Activated naive CD4-positive, alpha-beta T cell treated with anti-CD3 and anti-CD28 coated beads for 36 hours (primary cell): ENCODE measurements at regions of chr3 and their contacts with region 1.

Region 1: DNA sequence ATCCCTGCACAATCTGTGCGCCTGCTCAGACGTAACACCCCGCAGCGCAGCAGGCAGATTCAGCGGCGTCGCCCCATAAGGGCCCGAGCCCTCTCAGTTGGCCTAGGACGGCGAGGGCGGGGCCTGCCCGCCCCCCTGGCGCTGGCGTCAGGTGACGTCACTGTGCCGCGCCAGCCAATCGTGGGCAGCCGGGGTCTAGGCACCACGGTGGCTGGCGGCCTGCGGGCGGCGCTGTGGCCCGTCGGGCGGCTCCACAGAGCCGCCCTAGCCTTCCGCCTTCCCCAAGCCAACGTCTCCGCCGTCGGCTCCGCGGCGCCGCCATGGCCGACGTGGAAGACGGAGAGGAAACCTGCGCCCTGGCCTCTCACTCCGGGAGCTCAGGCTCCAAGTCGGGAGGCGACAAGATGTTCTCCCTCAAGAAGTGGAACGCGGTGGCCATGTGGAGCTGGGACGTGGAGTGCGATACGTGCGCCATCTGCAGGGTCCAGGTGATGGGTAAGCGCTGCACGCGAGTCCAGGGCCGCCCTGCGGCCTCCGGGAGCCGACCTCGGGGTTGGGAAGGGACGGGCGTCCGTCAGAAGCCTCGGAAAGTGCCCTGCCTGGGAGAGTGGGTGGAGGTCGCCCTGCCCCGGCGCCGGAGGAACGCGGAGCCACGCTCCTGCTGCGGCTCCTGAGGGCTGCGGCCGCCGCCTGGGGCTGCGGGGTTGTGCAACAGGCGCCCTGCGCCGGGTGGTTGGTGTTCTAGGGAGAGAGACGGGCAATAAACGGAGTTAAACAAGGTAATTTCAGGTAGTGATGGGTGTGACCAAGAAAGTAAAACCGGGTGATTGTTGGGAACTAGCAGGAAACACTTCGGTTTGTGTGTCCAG is at the start of gene RNF7:
- DNase-seq: peak; percentile 96
- H3K4me3 Mint-ChIP-seq: peak within 1 kb of the TSS; percentile 99
- H3K27ac Mint-ChIP-seq: peak within 1 kb of the TSS; percentile 99
- H3K4me1 Mint-ChIP-seq: peaks cover 36% of the 10 kb centered on the region
- H3K27me3 Mint-ChIP-seq: no peaks in the 10 kb centered on the region
- total RNA-seq, gene RNF7: 56.3 to 57.4 TPM

Region 2: GRCh38 chr3:141303481-141304223 is 434.6 kb before region 1 on chr3:
- CTCF ChIA-PET with region 1: interaction called, 3 read pairs
- intact Hi-C with region 1: loop called (anchors 2 kb)
- DNase-seq: peak; percentile 85
- H3K4me3 Mint-ChIP-seq: no peak overlapping the region
- H3K27ac Mint-ChIP-seq: no peak overlapping the region
- H3K4me1 Mint-ChIP-seq: peaks cover 55% of the 10 kb centered on the region
- H3K27me3 Mint-ChIP-seq: no peaks in the 10 kb centered on the region

Region 3: DNA sequence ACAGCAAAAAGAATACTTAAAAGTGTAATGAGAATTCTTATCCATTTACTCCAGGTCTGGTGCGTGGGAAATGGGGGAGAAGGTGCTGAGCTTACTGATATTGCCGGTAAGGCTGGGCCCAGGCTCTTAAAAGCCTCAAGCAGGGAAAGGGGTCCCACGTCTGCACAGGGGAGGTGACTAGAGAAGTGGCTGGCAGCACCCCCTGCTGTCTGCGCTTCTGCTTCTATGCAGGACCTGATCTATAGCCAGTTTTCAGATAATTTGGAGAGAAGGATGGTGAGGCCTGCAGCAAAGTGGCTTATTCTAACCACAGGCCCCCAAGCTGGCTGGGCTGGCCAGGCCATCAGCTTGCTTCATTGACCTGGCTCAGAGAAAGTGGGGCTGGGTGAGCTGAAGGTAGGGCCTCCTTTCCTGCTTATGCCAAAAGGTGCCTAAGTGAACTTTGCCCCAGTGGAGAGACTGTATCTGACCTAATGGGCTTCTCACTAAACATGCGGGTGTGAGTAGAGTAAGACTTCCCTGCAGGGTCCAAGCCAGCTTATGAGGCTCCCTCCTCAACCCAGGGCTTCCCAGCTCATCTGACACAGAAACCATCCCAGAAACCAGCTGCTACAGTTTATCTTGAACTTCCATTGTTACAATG is 107.3 kb after region 1 on chr3:
- CTCF ChIA-PET with region 1: interaction called, 3 read pairs
- intact Hi-C with region 1: loop called (anchors 1 kb)
- DNase-seq: peak; percentile 48
- H3K4me3 Mint-ChIP-seq: no peak overlapping the region
- H3K27ac Mint-ChIP-seq: no peak overlapping the region
- H3K4me1 Mint-ChIP-seq: peaks cover 13% of the 10 kb centered on the region
- H3K27me3 Mint-ChIP-seq: no peaks in the 10 kb centered on the region

Region 4: DNA sequence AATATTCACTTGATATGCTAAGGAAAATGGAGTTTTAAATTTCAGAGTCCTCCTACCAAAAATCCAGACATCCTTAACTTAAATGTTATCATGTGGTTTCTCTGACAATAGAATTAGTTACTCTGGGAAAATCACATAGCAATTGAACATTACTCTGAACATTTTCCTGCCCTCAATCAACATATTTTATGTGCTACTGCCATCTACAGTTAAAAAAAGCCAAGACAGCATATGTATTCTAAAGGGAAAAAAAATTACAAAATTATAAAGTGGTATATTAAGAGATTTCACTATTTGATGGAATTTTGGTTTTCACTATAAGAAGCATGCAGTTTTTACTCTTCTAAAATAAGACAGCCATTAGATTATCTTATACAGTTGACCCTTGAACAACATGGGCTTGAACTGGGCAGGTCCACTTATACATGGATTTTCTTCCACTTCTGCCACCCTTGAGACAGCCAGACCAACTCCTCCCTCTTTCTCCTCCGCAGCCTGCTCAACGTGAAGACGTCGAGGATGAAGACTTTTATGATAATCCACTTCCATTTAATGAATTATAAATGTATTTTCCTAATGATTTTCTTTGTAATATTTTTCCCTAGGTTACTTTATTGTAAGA is 260.5 kb after region 1 on chr3:
- CTCF ChIA-PET with region 1: interaction called, 3 read pairs
- intact Hi-C with region 1: loop called (anchors 1 kb)
- DNase-seq: no peak
- H3K4me3 Mint-ChIP-seq: no peak overlapping the region
- H3K27ac Mint-ChIP-seq: no peak overlapping the region
- H3K4me1 Mint-ChIP-seq: no peaks in the 10 kb centered on the region
- H3K27me3 Mint-ChIP-seq: no peaks in the 10 kb centered on the region

Region 5: GRCh38 chr3:142226484-142226883 is 488.2 kb after region 1 on chr3:
- CTCF ChIA-PET with region 1: no interaction called
- intact Hi-C with region 1: loop called (anchors 1 kb)
- DNase-seq: no peak
- H3K4me3 Mint-ChIP-seq: no peak overlapping the region
- H3K27ac Mint-ChIP-seq: no peak overlapping the region
- H3K4me1 Mint-ChIP-seq: peaks cover 19% of the 10 kb centered on the region
- H3K27me3 Mint-ChIP-seq: no peaks in the 10 kb centered on the region

Region 6: DNA sequence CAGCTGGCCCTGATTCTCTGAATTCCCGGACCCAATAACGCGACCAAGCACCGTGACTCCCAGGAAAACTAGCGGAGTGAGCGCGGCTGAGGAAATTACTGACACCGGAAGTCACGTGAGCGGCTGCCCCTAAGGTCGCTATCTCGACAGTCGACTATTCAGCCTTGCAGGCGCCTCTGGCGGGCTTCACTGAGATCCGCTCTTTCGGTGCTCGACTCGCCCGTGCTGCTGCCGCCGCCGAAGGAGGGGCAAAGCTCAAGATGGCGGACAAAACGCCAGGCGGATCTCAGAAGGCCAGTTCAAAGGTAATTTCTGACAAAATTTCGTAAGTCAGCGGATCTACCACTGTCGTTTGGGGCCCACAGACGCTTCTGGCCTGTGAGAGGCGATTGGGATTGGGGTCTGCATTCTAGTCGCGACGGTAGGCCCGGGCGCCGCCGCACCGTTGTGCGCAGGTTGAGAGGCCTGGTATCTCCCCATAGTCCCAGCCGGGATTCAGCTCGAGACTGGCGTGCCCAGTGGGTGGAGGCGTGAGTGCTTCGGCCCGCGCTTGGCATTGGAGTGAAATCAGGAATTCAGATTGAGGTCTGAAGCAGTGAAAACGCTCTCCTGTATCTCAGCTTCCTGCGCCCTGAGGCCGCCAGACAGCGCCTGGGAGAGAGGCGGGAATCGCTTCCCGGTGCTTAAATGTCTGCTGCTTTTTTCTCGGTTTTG is 1263.3 kb after region 1 on chr3 and contains the start of gene U2SURP:
- CTCF ChIA-PET with region 1: no interaction called
- intact Hi-C with region 1: loop called (anchors 2 kb)
- DNase-seq: peak; percentile 95
- H3K4me3 Mint-ChIP-seq: peak within 1 kb of the TSS; percentile 96
- H3K27ac Mint-ChIP-seq: peak within 1 kb of the TSS; percentile 96
- H3K4me1 Mint-ChIP-seq: peaks cover 31% of the 10 kb centered on the region
- H3K27me3 Mint-ChIP-seq: no peaks in the 10 kb centered on the region
- total RNA-seq, gene U2SURP: 173 to 180 TPM